ENCODE measurements at regions of chr1 and their contacts with region 1.

Region 1: GRCh38 chr1:16938351-16939321 is 16.9 kb downstream of the CROCC start:
- DNase-seq: no peak
- ATAC-seq: no peak
- H3K4me3 Mint-ChIP-seq: no peak overlapping the region
- H3K27ac Mint-ChIP-seq: no peak overlapping the region
- H3K4me1 Mint-ChIP-seq: no peaks in the 10 kb centered on the region
- H3K27me3 Mint-ChIP-seq: no peaks in the 10 kb centered on the region

Region 2: GRCh38 chr1:16260814-16261213 is 677.8 kb before region 1 on chr1:
- CTCF ChIA-PET with region 1: no interaction called
- POLR2A ChIA-PET with region 1: no interaction called
- intact Hi-C with region 1: loop called in 1 of 2 experiments (anchors 5 kb)
- DNase-seq: no peak
- ATAC-seq: no peak
- H3K4me3 Mint-ChIP-seq: no peak overlapping the region
- H3K27ac Mint-ChIP-seq: no peak overlapping the region
- H3K4me1 Mint-ChIP-seq: no peaks in the 10 kb centered on the region
- H3K27me3 Mint-ChIP-seq: no peaks in the 10 kb centered on the region